HEK293T (cell line): ENCODE measurements at regions of chr6 and their contacts with region 1.

Region 1: DNA sequence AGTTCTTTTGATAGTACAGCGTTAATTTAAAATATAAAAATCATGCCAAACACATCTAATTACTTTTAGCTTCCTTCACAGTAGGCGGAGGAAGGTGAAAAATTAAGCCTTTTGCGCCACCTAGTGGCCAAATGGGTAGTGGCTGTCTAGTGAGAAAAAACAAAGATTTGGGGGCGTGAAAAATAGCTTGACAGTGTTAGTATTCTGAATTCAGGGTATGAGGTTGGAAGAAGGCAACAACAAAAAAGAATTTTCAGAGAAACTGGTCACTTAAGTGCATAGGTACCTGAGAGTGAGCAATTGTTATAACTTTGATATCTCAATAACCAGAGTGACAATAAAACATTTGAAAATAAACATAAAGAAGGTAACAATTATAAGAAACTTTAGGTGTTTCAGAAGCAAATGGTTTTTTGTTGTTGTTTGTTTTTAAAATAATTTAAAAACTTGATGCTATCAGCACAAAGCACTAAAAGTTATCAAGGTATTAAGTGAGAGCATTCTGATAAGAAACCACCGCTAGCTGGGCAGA is 14.3 kb downstream of the PSMB9 start:
- DNase-seq: peak; percentile 60

Region 2: GRCh38 chr6:32825966-32826365 is 42.4 kb before region 1 on chr6:
- CTCF ChIA-PET with region 1: interaction called, 25 read pairs
- POLR2A ChIA-PET with region 1: no interaction called
- DNase-seq: no peak

Region 3: DNA sequence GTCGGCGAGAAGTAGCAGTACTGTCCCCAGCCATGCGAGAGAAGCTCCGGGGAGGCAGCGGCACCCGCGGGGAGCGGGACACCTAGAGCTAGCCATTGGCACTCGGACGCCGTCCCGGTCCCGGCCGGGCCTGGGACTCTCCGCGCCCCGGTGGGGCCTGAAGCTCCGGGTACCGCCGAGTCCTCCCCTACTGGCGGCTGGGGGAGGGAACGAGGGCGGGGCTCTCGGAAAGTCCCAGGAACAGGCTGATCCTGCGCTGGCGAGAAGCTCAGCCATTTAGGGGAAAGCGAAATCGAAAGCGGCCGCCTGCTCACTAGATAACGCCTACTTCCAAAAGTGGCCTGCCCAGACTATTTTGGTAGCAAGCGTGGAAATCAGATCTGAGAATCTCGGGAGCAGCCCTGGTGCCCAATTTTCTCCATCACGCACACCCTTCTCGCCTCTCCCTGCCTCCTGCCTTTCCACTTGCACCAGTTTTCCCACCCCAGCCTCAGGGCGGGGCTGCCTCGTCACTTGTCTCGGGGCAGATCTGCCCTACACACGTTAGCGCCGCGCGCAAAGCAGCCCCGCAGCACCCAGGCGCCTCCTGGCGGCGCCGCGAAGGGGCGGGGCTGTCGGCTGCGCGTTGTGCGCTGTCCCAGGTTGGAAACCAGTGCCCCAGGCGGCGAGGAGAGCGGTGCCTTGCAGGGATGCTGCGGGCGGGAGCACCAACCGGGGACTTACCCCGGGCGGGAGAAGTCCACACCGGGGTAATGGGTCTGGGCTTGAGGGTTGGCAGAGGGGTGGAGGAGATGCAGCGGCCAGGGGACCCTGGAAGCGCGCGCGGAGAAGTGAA is 14.6 kb before region 1 on chr6 and contains the starts of genes PSMB9 and TAP1:
- CTCF ChIA-PET with region 1: interaction called, 13 read pairs
- POLR2A ChIA-PET with region 1: interaction called, 11 read pairs
- DNase-seq: peak; percentile 97